ENCODE measurements at regions of chr5 and their contacts with region 1.

Region 1: GRCh38 chr5:142145106-142145900 is 36.7 kb downstream of the NDFIP1 start:
- DNase-seq: peak; percentile 73
- H3K4me3 ChIP-seq: no peak overlapping the region
- H3K27ac ChIP-seq: no peak overlapping the region
- H3K4me1 ChIP-seq: no peaks in the 10 kb centered on the region
- CTCF ChIP-seq: peak; percentile 92

Region 2: DNA sequence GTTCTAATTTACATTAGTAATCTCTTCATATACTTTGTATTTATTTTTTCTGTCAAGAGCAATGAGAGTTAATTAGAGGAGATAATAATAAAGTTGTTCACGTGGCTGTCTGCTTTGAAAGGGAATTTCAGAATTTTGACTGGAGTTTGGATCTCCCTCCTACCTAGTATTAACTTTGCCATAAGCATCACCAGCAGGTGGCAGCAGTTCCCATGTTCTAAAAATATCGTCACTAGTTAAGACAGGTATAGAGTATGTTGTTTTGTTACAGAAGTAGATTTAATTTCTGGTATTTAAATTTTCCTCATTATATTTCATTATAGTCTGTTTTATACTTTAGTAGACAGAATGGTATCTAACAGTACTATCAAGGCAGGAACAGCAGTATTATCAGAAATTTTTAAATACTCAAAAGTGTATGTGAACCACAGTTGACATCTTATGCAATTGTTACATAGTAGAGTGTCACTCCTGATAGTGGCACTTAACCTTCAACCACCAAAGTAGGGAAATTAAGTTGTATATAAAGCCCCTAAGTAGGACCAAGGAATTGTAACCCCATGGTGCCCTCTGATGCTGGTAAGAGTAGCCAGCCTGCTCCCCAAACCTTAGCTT is 152.8 kb before region 1 on chr5:
- CTCF ChIA-PET with region 1: no interaction called
- POLR2A ChIA-PET with region 1: no interaction called
- intact Hi-C with region 1: loop called (anchors 5 kb)
- DNase-seq: peak; percentile 73
- H3K4me3 ChIP-seq: no peak overlapping the region
- H3K27ac ChIP-seq: no peak overlapping the region
- H3K4me1 ChIP-seq: no peaks in the 10 kb centered on the region
- CTCF ChIP-seq: peak; percentile 95

Region 3: GRCh38 chr5:142012792-142013388 is 132.4 kb before region 1 on chr5 and contains the start of gene GNPDA1:
- CTCF ChIA-PET with region 1: no interaction called
- POLR2A ChIA-PET with region 1: interaction called, 6 read pairs
- intact Hi-C with region 1: loop called (anchors 1 kb)
- DNase-seq: peak; percentile 84
- H3K4me3 ChIP-seq: peak within 1 kb of the TSS; percentile 87
- H3K27ac ChIP-seq: peak within 1 kb of the TSS; percentile 45
- H3K4me1 ChIP-seq: peaks cover 44% of the 10 kb centered on the region
- CTCF ChIP-seq: peak; percentile 28; the same call in 1 of the 2 replicates
- total RNA-seq, gene GNPDA1: 20.2 and 22.9 TPM in 2 replicates

Region 4: DNA sequence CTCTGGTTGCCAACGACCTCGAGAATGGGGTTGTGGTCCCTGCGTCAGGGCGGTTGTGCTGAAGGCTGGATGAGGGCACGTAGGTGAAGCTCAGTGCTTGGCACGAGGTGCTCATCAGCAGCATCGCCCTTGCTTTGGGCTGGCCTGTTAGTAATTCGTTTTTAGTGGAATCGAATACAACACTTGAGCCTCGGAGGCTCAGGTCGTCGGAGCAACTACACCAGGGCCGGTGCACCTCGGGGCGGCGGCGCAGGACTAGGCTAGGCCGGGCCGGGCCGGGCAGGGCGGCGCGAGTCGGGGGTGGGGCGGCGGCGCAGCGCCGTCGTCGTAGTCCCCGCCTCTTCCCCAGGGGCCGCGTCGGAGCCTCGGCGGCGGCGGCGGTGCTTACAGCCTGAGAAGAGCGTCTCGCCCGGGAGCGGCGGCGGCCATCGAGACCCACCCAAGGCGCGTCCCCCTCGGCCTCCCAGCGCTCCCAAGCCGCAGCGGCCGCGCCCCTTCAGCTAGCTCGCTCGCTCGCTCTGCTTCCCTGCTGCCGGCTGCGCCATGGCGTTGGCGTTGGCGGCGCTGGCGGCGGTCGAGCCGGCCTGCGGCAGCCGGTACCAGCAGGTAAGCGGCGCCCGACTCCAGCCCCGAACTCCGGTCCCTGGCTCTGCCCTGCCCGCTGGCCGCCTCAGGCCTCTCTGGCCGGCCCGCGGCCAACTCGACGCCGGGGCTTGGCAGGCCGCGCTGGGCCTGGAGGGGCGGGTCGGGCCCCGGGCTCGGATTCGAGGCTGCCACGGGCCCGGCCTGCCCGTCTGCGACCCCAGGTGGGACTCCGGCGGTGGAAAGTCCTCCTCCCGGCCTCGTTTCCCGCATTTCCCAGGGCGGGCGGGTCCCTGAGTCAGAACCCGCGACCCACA is 36.6 kb before region 1 on chr5 and contains the start of gene NDFIP1:
- CTCF ChIA-PET with region 1: no interaction called
- POLR2A ChIA-PET with region 1: interaction called, 4 read pairs
- intact Hi-C with region 1: loop called (anchors 2 kb)
- DNase-seq: peak; percentile 79
- H3K4me3 ChIP-seq: peak within 1 kb of the TSS; percentile 86
- H3K27ac ChIP-seq: peak within 1 kb of the TSS; percentile 66
- H3K4me1 ChIP-seq: peaks cover 15% of the 10 kb centered on the region
- CTCF ChIP-seq: no peak; the same call in none of the 2 replicates
- total RNA-seq, gene NDFIP1: 15.4 and 18.7 TPM in 2 replicates